ENCODE measurements at regions of chr11 and their contacts with region 1.

Region 1: GRCh38 chr11:66677599-66678375 is at the start of gene RBM4B:
- DNase-seq: peak; percentile 93 to 97 (median 95)
- H3K4me3 ChIP-seq: peak within 1 kb of the TSS; percentile 74 to 85 (median 79)
- H3K4me3 Mint-ChIP-seq: peak within 1 kb of the TSS; percentile 89 to 95
- H3K27ac ChIP-seq: peak within 1 kb of the TSS; percentile 85 to 93
- H3K27ac Mint-ChIP-seq: peak within 1 kb of the TSS; percentile 95 to 98 (median 97)
- H3K4me1 ChIP-seq: peaks cover 18 to 26% of the 10 kb centered on the region in 2 donors
- H3K4me1 Mint-ChIP-seq: peaks cover 27% of the 10 kb centered on the region
- H3K27me3 ChIP-seq: no peaks in the 10 kb centered on the region
- H3K27me3 Mint-ChIP-seq: peaks cover 0 to 3% (median 0%) of the 10 kb centered on the region in 3 donors
- CTCF ChIP-seq: no peak
- polyA plus RNA-seq, gene RBM4B: 7.8 to 14.3 (median 11.2) TPM

Region 2: DNA sequence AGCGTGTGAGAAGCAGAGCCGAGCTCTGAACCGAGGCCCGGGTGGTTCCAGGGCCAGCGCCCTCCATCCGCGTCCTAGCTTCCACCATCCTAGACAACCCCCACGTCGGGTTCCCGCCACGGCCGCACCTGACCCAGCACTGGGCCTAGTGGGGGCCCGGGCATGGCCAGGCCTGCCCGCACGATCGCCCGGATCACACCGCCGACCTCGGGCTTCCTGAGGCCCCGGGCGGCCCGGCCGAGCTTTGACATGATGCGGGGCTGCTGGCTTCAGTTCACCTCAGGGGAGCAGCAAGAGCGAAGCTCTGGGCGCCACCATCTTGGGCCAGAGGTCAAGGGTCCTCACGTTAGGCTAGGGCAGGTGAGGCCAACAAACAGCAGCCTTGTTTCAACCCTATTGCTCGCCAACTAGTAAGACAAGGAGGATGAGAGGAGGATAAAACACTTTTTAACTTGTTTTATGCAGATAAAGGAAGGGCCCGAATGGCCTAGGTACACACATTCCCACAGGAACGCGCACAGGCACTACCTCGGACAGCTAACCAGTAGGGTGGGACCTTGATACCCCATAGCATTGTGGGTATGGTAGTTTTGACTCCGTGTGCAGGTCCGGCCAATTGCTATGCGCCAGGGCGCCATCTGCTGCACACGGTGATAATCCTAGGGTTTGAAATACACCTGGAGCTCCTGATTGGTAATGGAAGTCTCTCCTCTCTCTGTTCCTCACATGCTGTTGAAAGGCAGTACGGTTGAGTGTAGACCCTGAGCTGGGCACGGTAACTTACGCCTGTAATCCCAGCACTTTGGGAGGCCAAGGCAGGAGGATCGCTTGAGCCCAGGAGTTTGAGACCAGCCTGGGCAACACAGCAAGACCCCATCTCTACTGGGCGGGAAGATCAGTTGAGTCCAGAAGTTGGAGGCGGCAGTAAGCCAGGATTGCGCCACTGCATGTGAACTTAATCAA is 239.0 kb before region 1 on chr11 and contains the start of gene MRPL11:
- intact Hi-C with region 1: loop called in 1 of 2 experiments (anchors 10 kb)
- DNase-seq: peak; percentile 82 to 88 (median 85)
- H3K4me3 ChIP-seq: peak within 1 kb of the TSS; percentile 59 to 91 (median 66)
- H3K4me3 Mint-ChIP-seq: peak within 1 kb of the TSS; percentile 85 to 96
- H3K27ac ChIP-seq: peak within 1 kb of the TSS; percentile 6 to 81
- H3K27ac Mint-ChIP-seq: peak within 1 kb of the TSS; percentile 81 to 99 (median 97)
- H3K4me1 ChIP-seq: peaks cover 19 to 23% of the 10 kb centered on the region in 2 donors
- H3K4me1 Mint-ChIP-seq: peaks cover 17% of the 10 kb centered on the region
- H3K27me3 ChIP-seq: no peaks in the 10 kb centered on the region
- H3K27me3 Mint-ChIP-seq: peaks cover 0 to 2% (median 0%) of the 10 kb centered on the region in 3 donors
- CTCF ChIP-seq: peak; percentile 53
- polyA plus RNA-seq, gene MRPL11: 14.7 to 64.6 (median 59.6) TPM

Region 3: DNA sequence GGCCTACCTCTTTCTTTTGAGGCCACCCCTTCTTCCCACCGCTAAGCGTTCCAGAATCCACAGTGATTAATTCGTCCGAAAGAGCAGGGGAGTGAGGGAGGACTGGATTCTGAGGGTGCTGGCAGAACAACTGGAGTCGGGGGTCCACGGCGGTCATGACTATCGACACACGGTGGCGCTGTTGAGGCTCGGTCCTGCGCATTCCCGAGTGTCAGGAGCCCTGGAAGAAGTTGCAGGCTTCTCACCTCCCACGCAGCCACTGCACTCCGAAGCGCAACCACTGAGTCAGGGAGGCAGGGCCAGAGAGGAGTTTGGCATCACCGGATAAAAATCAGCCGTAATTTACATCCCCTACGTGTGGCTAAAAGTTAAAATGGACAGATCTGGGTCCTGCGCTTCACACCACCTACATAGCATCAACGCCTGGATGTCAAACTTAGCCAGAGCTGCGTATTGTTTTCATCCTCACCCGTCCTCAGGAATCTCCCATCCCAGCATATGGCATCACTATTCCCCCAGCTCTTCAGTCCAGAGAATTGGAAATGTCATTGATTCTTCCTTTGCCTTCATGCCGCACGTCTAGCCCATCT is 98.7 kb before region 1 on chr11:
- intact Hi-C with region 1: loop called (anchors 1 to 5 kb)
- DNase-seq: peak; percentile 52 to 74 (median 73)
- H3K4me3 ChIP-seq: no peak overlapping the region
- H3K4me3 Mint-ChIP-seq: peak overlapping the region in 1 of 2 donors; percentile 22
- H3K27ac ChIP-seq: no peak overlapping the region
- H3K27ac Mint-ChIP-seq: no peak overlapping the region
- H3K4me1 ChIP-seq: peaks cover 0 to 4% of the 10 kb centered on the region in 2 donors
- H3K4me1 Mint-ChIP-seq: peaks cover 7% of the 10 kb centered on the region
- H3K27me3 ChIP-seq: no peaks in the 10 kb centered on the region
- H3K27me3 Mint-ChIP-seq: peaks cover 10 to 21% (median 15%) of the 10 kb centered on the region in 3 donors
- CTCF ChIP-seq: peak; percentile 75

Region 4: GRCh38 chr11:66592457-66593302 is 85.1 kb before region 1 on chr11 and contains the starts of genes CCDC87 and CCS:
- intact Hi-C with region 1: loop called in 1 of 2 experiments (anchors 5 kb)
- DNase-seq: peak; percentile 96 to 98 (median 96)
- H3K4me3 ChIP-seq: peak within 1 kb of the TSS; percentile 64 to 84 (median 81)
- H3K4me3 Mint-ChIP-seq: peak within 1 kb of the TSS; percentile 97 to 100
- H3K27ac ChIP-seq: peak within 1 kb of the TSS; percentile 63 to 84
- H3K27ac Mint-ChIP-seq: peak within 1 kb of the TSS; percentile 95 to 99 (median 98)
- H3K4me1 ChIP-seq: peaks cover 14 to 35% of the 10 kb centered on the region in 2 donors
- H3K4me1 Mint-ChIP-seq: peaks cover 26% of the 10 kb centered on the region
- H3K27me3 ChIP-seq: no peaks in the 10 kb centered on the region
- H3K27me3 Mint-ChIP-seq: peaks cover 0 to 1% (median 0%) of the 10 kb centered on the region in 3 donors
- CTCF ChIP-seq: peak; percentile 84
- polyA plus RNA-seq, gene CCDC87: not detected
- polyA plus RNA-seq, gene CCS: 26.9 to 67.9 (median 37.0) TPM

Region 5: DNA sequence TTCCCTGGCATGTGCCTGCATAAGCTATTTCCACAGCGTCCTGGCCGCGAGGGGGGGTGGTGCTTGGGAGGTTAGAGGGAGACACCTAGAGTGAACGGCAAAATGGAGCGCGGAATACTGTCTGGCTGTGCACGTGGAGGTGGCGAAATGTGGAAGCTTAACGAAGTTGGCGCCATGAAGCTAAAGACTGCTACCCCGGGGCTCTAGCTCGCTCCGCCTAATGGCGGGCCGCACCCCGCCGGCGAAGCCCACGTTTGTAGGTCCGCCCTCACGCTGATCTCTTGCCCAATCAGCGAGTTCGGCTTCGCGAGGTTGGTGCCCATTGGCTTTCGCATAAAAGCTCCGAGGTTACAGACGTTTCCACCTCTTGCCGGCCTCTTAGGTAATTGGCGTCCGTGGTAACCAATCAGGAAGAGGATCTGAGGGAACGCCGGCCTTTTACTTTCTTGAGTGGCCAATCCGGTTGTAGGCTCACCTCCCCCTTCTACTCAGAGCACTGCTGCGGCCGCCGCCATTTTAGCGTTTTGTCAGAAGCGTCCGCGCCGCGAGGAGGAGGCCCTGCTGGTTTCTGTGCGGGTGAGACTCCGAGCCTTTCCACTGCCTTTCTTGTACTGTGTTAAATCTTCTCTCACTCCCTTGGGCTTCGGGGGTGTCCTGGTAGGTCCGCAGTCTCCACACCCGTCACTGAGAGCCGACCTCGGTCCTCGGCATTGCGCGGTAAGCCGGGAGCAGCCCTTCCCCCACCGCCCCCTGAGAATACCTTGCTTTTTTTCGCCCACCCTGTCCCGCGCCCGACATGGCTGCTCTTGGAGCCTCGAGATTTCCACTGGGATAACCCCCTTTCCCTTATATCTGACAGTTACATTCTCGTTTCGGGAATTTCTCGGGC is 39.4 kb before region 1 on chr11 and contains the start of gene RBM4:
- intact Hi-C with region 1: loop called in 1 of 2 experiments (anchors 5 kb)
- DNase-seq: peak; percentile 99 to 100 (median 99)
- H3K4me3 ChIP-seq: peak within 1 kb of the TSS; percentile 81 to 99 (median 94)
- H3K4me3 Mint-ChIP-seq: peak within 1 kb of the TSS; percentile 95 to 98
- H3K27ac ChIP-seq: peak within 1 kb of the TSS; percentile 92 to 94
- H3K27ac Mint-ChIP-seq: peak within 1 kb of the TSS; percentile 96 to 99 (median 98)
- H3K4me1 ChIP-seq: peaks cover 43 to 45% of the 10 kb centered on the region in 2 donors
- H3K4me1 Mint-ChIP-seq: peaks cover 50% of the 10 kb centered on the region
- H3K27me3 ChIP-seq: no peaks in the 10 kb centered on the region
- H3K27me3 Mint-ChIP-seq: no peaks in the 10 kb centered on the region
- CTCF ChIP-seq: no peak
- polyA plus RNA-seq, gene RBM4: 112 to 153 (median 153) TPM